Left cardiac atrium (tissue), 4 donors: ENCODE measurements at regions of chr5 and their contacts with region 1.

Region 1: DNA sequence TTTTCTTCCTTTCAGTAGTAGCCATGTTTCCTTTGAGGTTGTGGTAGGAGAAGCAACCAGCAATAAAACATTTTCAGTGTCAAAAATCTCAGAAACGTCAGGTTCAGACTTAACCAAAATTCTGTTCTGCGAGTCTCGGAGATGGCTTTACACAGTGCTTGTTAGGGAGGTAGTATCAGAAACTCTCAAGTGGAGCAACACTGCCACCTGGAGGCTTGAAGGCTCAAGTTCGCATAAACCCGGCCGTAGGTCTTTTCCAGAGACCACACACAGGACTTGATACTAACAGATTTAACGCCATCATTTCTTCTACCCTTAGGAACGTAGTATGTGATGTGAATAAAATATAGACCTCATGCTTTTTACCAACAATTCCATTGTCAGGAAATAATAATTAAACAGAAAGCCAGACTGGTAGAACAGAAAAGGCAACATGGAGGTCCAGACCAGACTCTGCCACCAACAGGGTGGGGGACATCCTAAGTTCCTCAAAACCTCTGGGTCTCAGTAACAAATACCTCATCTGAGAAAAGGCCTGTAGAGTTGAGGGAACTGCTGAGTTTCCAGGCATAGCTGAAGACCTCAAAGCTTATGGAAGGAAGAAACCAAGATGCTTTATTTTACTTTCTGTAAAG is 8.5 kb downstream of the PTGER4 start:
- DNase-seq: peak; percentile 81
- ATAC-seq: peak; percentile 93 to 94

Region 2: DNA sequence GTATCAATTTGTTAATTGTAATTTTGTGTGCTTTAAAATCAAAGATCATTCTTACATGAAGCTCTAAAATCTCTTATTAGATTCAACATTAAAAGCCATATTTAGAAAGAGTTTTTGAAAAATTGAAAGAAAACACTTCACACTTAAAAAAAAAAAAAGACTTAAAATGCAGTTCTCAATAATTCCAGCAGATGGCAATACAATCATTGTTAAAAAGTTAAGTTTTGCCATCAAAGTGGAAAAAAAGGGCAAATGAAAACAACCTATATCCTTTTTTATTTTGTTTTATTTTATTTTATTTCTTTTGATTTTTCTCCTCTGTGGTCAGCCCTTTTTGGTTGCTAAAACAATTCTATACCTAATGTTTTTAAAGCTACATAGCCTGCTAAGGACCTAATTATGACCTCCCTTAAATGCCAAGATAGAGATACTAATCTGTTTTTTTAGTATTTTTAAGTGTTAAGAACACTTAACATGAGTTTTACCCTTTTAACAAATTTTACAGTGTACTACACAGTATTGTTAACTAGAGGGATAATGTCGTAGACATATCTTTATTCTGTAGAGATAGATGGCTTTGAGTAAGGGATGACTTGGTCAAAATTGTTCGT is 1109.3 kb before region 1 on chr5:
- intact Hi-C with region 1: loop called in 1 of 2 experiments (anchors 5 kb)
- DNase-seq: no peak
- ATAC-seq: no peak

Region 3: GRCh38 chr5:39716528-39717028 is 971.7 kb before region 1 on chr5:
- intact Hi-C with region 1: loop called in 1 of 2 experiments (anchors 5 kb)
- DNase-seq: no peak
- ATAC-seq: peak; percentile 50 to 57

Region 4: GRCh38 chr5:39948867-39949468 is 739.3 kb before region 1 on chr5:
- intact Hi-C with region 1: loop called (anchors 2 to 10 kb)
- DNase-seq: peak; percentile 28
- ATAC-seq: peak; percentile 65 to 77

Region 5: DNA sequence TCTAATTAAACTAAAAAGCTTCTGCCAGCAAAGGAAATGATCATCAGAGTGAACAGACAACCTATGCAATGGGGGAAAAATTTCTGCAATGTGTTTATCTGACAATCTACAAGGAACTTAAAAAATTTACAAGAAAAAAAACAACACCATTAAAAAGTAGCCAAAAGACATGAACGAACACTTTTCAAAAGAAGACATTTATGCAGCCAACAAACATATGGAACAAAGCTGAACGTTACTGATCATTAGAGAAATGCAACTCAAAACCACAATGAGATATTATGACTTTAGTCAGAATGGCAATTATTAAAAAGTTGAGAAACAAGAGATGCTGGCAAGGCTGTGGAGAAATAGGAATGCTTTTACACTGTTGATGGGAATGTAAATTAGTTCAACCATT is 733.1 kb before region 1 on chr5:
- intact Hi-C with region 1: loop called (anchors 2 to 10 kb)
- DNase-seq: no peak
- ATAC-seq: no peak